ENCODE measurements at regions of chr17 and their contacts with region 1.

Region 1: GRCh38 chr17:57747221-57748017 is 2.3 kb upstream of the CCDC182 start:
- DNase-seq: peak; percentile 64
- ATAC-seq: peak; percentile 68
- H3K4me3 Mint-ChIP-seq: no peak overlapping the region
- H3K27ac Mint-ChIP-seq: no peak overlapping the region
- H3K4me1 Mint-ChIP-seq: no peaks in the 10 kb centered on the region
- H3K27me3 Mint-ChIP-seq: peaks cover 2% of the 10 kb centered on the region

Region 2: DNA sequence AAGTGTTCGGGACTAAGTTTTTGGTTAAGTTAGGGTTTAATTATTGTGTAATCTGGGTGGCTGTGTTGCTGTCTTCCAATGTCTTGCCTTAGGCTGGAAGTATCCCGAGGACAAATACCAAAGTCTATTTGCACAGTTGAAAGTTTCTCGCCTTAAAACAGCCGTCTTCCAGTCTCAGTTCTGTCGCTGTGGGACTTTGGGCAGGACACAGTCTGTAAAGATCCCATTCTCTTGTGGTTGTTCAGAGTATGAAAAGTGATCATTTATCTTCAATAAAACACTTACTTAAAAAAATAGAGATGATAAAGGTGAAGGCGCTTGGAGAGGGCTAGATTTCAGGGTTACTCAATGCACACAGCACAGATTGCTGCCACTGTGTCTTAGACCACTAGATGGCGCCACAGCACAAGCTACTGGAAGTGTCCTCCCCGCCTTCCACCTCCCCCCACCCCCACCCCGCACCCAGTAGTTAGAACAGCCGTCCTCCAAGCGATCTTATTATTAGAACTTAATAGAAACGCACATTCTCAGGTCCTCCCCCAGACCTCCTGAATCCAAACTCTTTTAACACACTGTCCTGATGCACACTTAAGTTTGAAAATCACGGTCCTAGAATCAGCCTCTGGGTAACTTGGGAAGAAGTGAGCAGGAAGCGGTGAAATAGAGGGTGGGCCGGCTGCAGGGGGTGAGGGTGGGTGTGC is 616.5 kb before region 1 on chr17:
- CTCF ChIA-PET with region 1: interaction called, 3 read pairs
- POLR2A ChIA-PET with region 1: no interaction called
- intact Hi-C with region 1: loop called (anchors 1 to 2 kb)
- DNase-seq: peak; percentile 91
- ATAC-seq: peak; percentile 84
- H3K4me3 Mint-ChIP-seq: no peak overlapping the region
- H3K27ac Mint-ChIP-seq: no peak overlapping the region
- H3K4me1 Mint-ChIP-seq: peaks cover 5% of the 10 kb centered on the region
- H3K27me3 Mint-ChIP-seq: no peaks in the 10 kb centered on the region

Region 3: GRCh38 chr17:57552114-57552624 is 195.2 kb before region 1 on chr17:
- CTCF ChIA-PET with region 1: no interaction called
- POLR2A ChIA-PET with region 1: no interaction called
- intact Hi-C with region 1: loop called in 1 of 2 experiments (anchors 10 kb)
- DNase-seq: peak; percentile 61
- ATAC-seq: peak; percentile 74
- H3K4me3 Mint-ChIP-seq: no peak overlapping the region
- H3K27ac Mint-ChIP-seq: peak overlapping the region; percentile 29
- H3K4me1 Mint-ChIP-seq: peaks cover 28% of the 10 kb centered on the region
- H3K27me3 Mint-ChIP-seq: no peaks in the 10 kb centered on the region

Region 4: DNA sequence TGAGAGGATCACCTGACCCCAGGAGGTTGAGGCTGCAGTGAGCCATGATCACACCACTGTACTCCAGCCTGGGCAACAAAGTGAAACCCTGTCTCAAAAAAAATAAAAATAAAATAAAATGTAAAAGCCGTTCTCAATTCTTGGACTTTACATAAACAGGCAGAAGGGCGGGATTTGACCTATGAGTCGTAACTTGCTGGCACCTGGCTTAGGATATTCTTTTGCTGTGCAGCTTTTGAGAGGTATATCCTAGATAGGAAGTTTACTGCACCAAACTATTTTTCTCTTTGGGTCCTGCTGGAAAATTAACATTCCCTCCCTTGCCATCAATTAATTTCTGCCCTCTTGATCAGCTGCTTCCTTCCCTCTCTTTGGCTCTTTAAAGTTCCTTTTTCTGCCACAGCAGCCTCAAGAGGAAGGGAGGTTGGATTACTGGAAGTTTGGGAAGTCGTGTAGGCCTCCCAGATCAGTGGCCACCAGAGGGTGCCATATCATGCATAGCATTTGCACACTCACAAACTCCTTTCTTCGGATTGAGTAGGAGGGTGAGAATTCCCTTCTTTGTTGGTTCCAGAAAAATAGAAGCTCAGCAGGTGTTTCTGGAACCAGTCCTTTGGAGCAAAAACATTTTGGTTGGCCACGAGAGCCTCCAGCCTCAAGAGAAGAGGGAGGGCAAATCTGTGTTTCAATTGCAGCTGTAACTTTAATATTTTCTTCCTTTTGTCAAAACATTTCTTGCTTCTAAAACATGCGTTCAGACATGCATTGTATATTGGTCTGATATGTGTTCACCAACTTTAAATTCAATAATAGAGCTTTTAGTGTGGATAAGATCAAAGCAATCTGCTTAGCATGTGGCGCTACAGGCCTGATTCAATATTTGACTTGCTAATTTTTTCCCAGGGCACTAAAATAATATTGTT is 149.6 kb before region 1 on chr17:
- CTCF ChIA-PET with region 1: interaction called, 3 read pairs
- POLR2A ChIA-PET with region 1: no interaction called
- intact Hi-C with region 1: loop called (anchors 2 to 5 kb)
- DNase-seq: peak; percentile 53
- ATAC-seq: no peak
- H3K4me3 Mint-ChIP-seq: no peak overlapping the region
- H3K27ac Mint-ChIP-seq: peak overlapping the region; percentile 81
- H3K4me1 Mint-ChIP-seq: peaks cover 50% of the 10 kb centered on the region
- H3K27me3 Mint-ChIP-seq: no peaks in the 10 kb centered on the region

Region 5: GRCh38 chr17:57644326-57644725 is 103.1 kb before region 1 on chr17:
- CTCF ChIA-PET with region 1: no interaction called
- POLR2A ChIA-PET with region 1: no interaction called
- intact Hi-C with region 1: no loop called
- DNase-seq: no peak
- ATAC-seq: no peak
- H3K4me3 Mint-ChIP-seq: no peak overlapping the region
- H3K27ac Mint-ChIP-seq: no peak overlapping the region
- H3K4me1 Mint-ChIP-seq: peaks cover 13% of the 10 kb centered on the region
- H3K27me3 Mint-ChIP-seq: no peaks in the 10 kb centered on the region

Region 6: DNA sequence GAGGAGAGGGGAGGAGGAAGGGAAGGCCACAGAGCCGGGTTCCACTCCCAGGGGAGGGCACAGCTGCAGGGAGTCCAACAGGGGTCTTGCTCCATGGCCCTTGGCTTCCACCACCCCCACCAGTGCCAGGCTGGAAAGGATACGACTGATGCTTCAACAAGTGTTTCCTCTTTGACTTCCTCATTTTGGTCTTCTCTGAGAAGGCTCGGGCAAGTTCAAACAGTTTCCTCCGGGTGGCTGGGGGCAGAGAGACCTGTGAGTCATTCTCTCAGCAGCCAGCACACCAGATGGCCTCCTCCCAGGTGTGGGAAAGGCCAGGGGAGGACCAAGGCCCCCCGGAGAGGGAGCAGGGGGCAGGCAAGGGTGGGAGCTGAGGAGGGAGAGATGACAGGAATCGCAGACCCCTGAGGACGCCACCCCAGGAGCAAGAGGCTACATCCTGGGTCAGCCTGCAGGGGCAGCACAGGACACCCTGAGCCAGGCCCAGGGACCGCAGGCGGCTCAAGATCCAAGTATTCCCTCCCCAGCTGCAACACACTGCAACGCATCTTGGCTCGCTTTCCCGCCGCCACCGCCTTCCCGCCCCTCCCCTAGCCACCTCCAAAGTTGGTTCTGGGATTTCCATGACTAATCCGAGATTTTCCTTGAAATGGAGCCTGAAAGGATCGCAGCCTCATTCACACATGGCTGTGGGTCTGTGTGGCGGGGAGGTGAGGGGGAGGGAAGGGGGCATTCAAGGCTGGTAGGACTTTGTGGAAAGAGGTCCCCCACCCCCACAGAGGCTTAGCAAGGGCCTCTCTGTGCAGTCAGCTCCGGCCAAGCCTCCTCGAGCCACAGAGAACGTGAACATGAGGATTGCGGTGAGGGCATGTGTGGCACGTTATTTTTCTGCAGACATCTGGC is 120.8 kb after region 1 on chr17:
- CTCF ChIA-PET with region 1: no interaction called
- POLR2A ChIA-PET with region 1: no interaction called
- intact Hi-C with region 1: no loop called
- DNase-seq: peak; percentile 58
- ATAC-seq: peak; percentile 89
- H3K4me3 Mint-ChIP-seq: no peak overlapping the region
- H3K27ac Mint-ChIP-seq: peak overlapping the region; percentile 10
- H3K4me1 Mint-ChIP-seq: peaks cover 11% of the 10 kb centered on the region
- H3K27me3 Mint-ChIP-seq: peaks cover 9% of the 10 kb centered on the region